Activated B cell treated with CpG ODN at 0.5 μM for 24 hours (primary cell): ENCODE measurements at regions of chr15 and their contacts with region 1.

Region 1: DNA sequence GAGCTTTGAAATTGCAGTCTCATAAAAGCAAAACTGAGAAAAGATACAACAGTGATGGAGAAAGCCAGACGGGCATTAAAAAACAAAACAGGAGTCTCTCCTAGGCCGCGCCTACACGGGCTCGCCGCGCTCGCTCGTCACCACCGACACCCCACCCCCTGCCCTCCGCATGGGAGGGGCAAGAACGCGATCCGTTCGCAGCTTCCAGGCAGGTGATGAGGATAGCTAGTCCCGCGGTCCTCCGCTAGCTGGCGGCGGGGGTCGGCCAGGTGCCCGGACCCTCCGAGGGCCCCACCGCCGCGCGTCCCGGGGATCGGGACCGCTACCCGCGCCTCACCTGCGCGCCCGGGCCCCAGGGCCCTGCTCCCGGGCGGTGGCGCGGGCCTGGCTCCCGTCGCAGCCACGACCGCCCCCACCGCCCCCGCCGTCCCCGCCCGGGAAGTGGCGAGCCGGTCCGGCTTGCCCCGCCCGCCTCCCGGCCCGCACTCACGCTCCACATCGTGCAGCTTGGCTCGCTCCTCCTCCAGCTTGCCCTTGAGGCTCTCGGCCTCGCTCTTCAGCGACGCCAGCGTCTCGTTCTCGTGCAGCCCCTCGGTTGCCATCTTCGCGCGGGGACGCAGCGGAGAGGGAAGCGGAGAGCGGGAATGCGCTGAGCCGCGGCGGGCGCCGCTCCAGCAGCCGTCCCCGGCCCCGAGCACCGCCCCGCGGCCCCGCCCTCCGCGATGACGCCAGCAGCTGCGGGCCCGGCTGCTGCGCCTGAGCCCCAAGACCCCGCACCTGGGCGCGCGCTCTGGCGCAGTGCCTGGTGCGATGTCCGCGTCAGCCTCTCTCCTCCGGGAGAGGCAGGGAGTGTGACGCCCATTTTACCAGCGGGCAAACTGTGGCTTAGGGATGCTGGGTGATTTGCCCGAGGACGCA is 11.7 kb downstream of the GNB5 start:
- DNase-seq: peak; percentile 95
- ATAC-seq: peak; percentile 80
- H3K4me3 Mint-ChIP-seq: peak overlapping the region; percentile 98
- H3K27ac Mint-ChIP-seq: peak overlapping the region; percentile 99
- H3K4me1 Mint-ChIP-seq: peaks cover 58% of the 10 kb centered on the region
- H3K27me3 Mint-ChIP-seq: no peaks in the 10 kb centered on the region
- CTCF ChIP-seq: no peak

Region 2: DNA sequence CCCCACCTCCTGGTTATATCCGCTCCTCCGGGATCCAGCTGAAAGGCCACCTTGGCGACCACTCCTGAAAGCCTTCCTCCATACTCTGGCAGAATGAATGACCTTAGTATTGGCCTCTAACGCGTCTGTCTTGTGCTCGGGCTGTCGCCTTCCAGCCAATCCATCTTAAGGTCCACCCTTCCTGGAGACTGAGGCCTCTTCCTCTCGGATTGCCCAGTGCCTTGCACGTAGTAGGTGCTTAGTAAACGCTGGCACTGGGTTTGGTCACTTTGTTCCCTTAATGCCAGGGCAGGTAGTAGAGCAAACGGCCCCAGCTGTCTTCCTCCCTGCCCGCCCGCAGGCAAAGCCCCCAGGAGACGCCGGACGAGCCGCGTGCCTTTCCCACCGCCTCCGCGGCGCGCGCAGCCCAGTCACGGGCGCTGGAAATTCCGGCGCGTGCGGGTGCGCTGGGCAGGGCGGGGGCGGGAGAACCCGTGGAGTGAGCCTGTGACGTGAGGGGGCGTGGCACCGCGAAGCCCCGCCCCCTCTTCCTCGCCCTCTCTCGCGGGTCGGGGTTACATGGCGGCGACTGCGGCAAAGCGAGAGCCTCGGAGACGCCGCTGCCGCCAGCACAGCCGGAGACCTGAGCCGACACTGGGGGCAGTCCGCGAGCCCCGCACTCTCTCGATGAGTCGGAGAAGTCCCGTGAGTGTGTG is 160.7 kb before region 1 on chr15 and contains the start of gene MAPK6:
- CTCF ChIA-PET with region 1: no interaction called
- POLR2A ChIA-PET with region 1: no interaction called
- intact Hi-C with region 1: loop called (anchors 2 kb)
- DNase-seq: peak; percentile 95
- ATAC-seq: peak; percentile 83
- H3K4me3 Mint-ChIP-seq: peak within 1 kb of the TSS; percentile 96
- H3K27ac Mint-ChIP-seq: peak within 1 kb of the TSS; percentile 98
- H3K4me1 Mint-ChIP-seq: peaks cover 37% of the 10 kb centered on the region
- H3K27me3 Mint-ChIP-seq: no peaks in the 10 kb centered on the region
- CTCF ChIP-seq: no peak
- total RNA-seq, gene MAPK6: 16.1 and 16.2 TPM in 2 replicates

Region 3: DNA sequence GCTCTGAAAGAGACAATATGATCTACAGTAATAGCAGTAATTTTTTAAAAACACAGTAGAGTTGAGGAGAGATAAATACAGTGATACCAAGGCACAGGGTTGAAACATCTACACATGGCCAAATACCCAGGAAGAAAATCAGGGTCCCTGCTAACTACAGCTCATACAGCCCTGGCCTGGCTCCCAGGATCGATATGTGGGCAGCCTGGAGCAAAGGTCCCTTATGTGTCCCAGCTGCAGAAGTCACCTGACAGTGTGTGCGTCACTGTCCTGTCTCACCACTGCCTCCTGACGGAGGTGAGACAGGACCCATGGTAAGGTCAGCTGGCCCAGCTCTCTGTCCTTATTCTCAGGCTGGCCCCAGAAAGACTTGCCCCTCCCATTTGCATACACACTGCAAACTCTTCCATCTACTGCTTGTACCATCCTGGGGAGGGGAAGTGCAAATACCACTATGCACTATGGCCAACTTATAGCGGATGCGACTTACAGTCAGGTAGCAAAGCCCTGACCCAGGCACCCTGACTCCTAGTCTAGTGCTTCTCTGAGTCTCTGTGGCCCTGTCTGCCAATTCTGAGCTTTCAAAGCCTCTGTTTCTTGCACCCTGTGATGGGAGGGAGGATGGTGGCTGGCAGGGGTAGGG is 44.9 kb before region 1 on chr15:
- CTCF ChIA-PET with region 1: no interaction called
- POLR2A ChIA-PET with region 1: no interaction called
- intact Hi-C with region 1: no loop called
- DNase-seq: no peak
- ATAC-seq: no peak
- H3K4me3 Mint-ChIP-seq: no peak overlapping the region
- H3K27ac Mint-ChIP-seq: no peak overlapping the region
- H3K4me1 Mint-ChIP-seq: peaks cover 19% of the 10 kb centered on the region
- H3K27me3 Mint-ChIP-seq: no peaks in the 10 kb centered on the region
- CTCF ChIP-seq: no peak

Region 4: GRCh38 chr15:52217186-52217585 is 37.6 kb after region 1 on chr15:
- CTCF ChIA-PET with region 1: interaction called, 5 read pairs
- POLR2A ChIA-PET with region 1: interaction called, 26 read pairs
- intact Hi-C with region 1: no loop called
- DNase-seq: no peak
- ATAC-seq: peak; percentile 33
- H3K4me3 Mint-ChIP-seq: no peak overlapping the region
- H3K27ac Mint-ChIP-seq: no peak overlapping the region
- H3K4me1 Mint-ChIP-seq: peaks cover 35% of the 10 kb centered on the region
- H3K27me3 Mint-ChIP-seq: no peaks in the 10 kb centered on the region
- CTCF ChIP-seq: no peak

Region 5: GRCh38 chr15:52261498-52262242 is 82.1 kb after region 1 on chr15:
- CTCF ChIA-PET with region 1: interaction called, 5 read pairs
- POLR2A ChIA-PET with region 1: interaction called, 24 read pairs
- intact Hi-C with region 1: loop called (anchors 1 kb)
- DNase-seq: peak; percentile 36
- ATAC-seq: peak; percentile 100
- H3K4me3 Mint-ChIP-seq: peak overlapping the region; percentile 71
- H3K27ac Mint-ChIP-seq: peak overlapping the region; percentile 94
- H3K4me1 Mint-ChIP-seq: peaks cover 39% of the 10 kb centered on the region
- H3K27me3 Mint-ChIP-seq: no peaks in the 10 kb centered on the region
- CTCF ChIP-seq: no peak

Region 6: DNA sequence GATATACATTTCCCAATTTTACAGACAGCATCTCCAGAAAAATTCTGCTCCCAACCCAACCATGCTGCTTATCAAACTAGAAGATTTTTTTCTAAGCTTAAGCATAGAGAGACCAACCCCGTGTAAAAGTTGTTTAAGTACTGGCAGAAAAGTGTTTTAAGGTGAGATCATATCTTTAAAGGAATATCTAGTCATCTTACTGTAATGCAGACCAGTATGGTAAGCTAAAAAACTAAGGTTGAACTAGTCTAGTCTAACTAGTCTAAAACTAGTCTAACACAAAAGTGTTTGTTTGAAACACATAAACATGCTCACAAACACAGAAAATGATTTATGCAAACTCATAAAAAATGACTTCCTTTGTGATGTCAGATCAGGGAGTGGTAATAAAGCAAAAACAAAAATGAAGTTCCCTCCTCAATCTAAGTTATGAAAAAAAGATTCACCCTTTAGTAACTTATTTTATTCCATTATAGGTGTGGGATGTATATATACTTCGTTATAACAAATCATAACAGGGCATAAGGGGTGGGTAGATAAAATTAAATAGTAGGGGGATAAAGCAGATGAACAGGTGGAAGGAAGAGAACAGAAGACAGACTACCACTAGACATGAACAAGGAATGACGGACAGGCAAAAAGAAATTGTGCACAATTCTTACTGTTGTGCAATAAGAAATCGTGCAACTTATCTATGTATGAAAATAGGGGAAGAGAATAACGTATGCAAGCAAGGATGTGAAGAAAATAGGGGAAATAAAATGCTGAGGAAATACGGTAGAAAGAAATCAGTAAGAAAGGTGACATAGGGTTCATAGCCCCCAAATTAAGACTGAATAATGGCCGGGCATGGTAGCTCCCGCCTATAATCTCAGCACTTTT is 339.2 kb after region 1 on chr15:
- CTCF ChIA-PET with region 1: no interaction called
- POLR2A ChIA-PET with region 1: no interaction called
- intact Hi-C with region 1: no loop called
- DNase-seq: no peak
- ATAC-seq: no peak
- H3K4me3 Mint-ChIP-seq: no peak overlapping the region
- H3K27ac Mint-ChIP-seq: no peak overlapping the region
- H3K4me1 Mint-ChIP-seq: peaks cover 42% of the 10 kb centered on the region
- H3K27me3 Mint-ChIP-seq: no peaks in the 10 kb centered on the region
- CTCF ChIP-seq: no peak

Region 7: GRCh38 chr15:52749258-52749657 is 569.7 kb after region 1 on chr15:
- CTCF ChIA-PET with region 1: no interaction called
- POLR2A ChIA-PET with region 1: interaction called, 14 read pairs
- intact Hi-C with region 1: no loop called
- DNase-seq: no peak
- ATAC-seq: peak; percentile 89
- H3K4me3 Mint-ChIP-seq: no peak overlapping the region
- H3K27ac Mint-ChIP-seq: no peak overlapping the region
- H3K4me1 Mint-ChIP-seq: peaks cover 11% of the 10 kb centered on the region
- H3K27me3 Mint-ChIP-seq: peaks cover 4% of the 10 kb centered on the region
- CTCF ChIP-seq: no peak

Region 8: GRCh38 chr15:53549697-53550305 is 1370.3 kb after region 1 on chr15:
- CTCF ChIA-PET with region 1: no interaction called
- POLR2A ChIA-PET with region 1: no interaction called
- intact Hi-C with region 1: no loop called
- DNase-seq: no peak
- ATAC-seq: no peak
- H3K4me3 Mint-ChIP-seq: no peak overlapping the region
- H3K27ac Mint-ChIP-seq: no peak overlapping the region
- H3K4me1 Mint-ChIP-seq: no peaks in the 10 kb centered on the region
- H3K27me3 Mint-ChIP-seq: no peaks in the 10 kb centered on the region
- CTCF ChIP-seq: no peak